ENCODE measurements at regions of chr12 and their contacts with region 1.

Region 1: GRCh38 chr12:101919447-101919846 is 42.1 kb downstream of the DRAM1 start:
- DNase-seq: no peak
- H3K4me3 Mint-ChIP-seq: no peak overlapping the region
- H3K27ac Mint-ChIP-seq: no peak overlapping the region
- H3K4me1 Mint-ChIP-seq: peaks cover 10% of the 10 kb centered on the region
- H3K27me3 Mint-ChIP-seq: peaks cover 2% of the 10 kb centered on the region

Region 2: GRCh38 chr12:101773650-101774162 is 145.7 kb before region 1 on chr12:
- intact Hi-C with region 1: loop called (anchors 2 kb)
- DNase-seq: peak; percentile 47
- H3K4me3 Mint-ChIP-seq: no peak overlapping the region
- H3K27ac Mint-ChIP-seq: peak overlapping the region; percentile 42
- H3K4me1 Mint-ChIP-seq: peaks cover 41% of the 10 kb centered on the region
- H3K27me3 Mint-ChIP-seq: no peaks in the 10 kb centered on the region

Region 3: DNA sequence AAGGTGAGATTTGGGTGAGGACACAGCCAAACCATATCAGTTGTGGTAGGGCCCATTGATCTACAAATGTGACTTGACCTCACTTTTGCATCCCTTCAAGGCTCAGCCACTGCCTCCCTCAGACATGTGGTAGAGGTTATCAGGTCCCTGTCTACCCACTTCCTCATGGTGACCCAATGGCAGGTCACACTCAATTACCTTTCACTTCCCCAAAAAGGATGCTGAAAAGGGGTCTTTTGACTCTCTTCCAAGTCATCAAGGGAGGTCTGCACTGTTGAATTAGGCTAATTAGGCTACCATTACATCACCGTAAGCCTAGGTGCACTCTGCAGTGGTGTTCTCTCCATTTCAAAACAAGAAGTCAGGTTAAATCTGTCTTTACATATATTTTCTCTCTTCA is 64.7 kb before region 1 on chr12:
- intact Hi-C with region 1: no loop called
- DNase-seq: no peak
- H3K4me3 Mint-ChIP-seq: no peak overlapping the region
- H3K27ac Mint-ChIP-seq: no peak overlapping the region
- H3K4me1 Mint-ChIP-seq: peaks cover 28% of the 10 kb centered on the region
- H3K27me3 Mint-ChIP-seq: no peaks in the 10 kb centered on the region

Region 4: GRCh38 chr12:102169922-102170621 is 250.6 kb after region 1 on chr12:
- intact Hi-C with region 1: loop called (anchors 5 kb)
- DNase-seq: no peak
- H3K4me3 Mint-ChIP-seq: no peak overlapping the region
- H3K27ac Mint-ChIP-seq: no peak overlapping the region
- H3K4me1 Mint-ChIP-seq: peaks cover 29% of the 10 kb centered on the region
- H3K27me3 Mint-ChIP-seq: no peaks in the 10 kb centered on the region

Region 5: DNA sequence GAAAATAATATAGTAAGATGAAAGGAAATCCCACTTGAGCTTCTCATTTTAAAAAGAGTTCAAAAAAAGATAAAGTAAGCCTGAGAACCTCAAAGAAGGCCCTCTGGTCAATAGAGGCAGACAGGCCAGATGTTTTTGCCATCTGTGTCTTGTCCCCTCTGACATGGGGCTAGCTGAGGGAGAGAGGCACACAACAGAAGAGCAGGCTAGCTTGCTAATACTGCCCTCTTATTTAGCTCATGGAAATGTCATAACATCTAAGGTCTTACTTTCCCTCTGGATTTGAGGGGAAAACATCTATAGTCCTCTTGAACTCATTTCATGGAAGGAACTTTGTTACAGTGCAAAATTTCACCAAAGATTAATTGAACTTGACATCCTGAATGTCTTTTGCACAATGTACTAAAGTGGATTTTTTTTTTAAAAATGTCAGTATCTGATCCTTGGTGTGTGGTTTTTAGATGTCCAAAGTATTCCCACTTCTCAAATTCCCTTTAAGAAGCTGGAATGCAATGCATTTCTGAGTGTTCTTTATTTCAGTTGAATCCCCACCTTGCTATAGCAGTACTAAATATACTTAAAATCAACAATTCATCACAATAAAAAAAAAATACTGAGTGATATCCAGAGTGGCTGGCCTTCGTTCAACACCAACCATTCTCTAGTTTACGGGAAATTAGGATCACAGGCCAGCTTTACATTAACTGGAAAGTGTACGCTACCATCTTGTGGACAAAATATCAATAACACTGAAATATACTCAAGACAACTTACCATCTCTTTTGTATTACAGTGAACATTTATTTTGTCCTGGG is 820.9 kb after region 1 on chr12:
- intact Hi-C with region 1: loop called (anchors 2 kb)
- DNase-seq: no peak
- H3K4me3 Mint-ChIP-seq: no peak overlapping the region
- H3K27ac Mint-ChIP-seq: no peak overlapping the region
- H3K4me1 Mint-ChIP-seq: peaks cover 4% of the 10 kb centered on the region
- H3K27me3 Mint-ChIP-seq: peaks cover under 1% of the 10 kb centered on the region

Region 6: GRCh38 chr12:102811110-102811737 is 891.8 kb after region 1 on chr12:
- intact Hi-C with region 1: loop called (anchors 1 kb)
- DNase-seq: no peak
- H3K4me3 Mint-ChIP-seq: no peak overlapping the region
- H3K27ac Mint-ChIP-seq: no peak overlapping the region
- H3K4me1 Mint-ChIP-seq: no peaks in the 10 kb centered on the region
- H3K27me3 Mint-ChIP-seq: peaks cover 5% of the 10 kb centered on the region

Region 7: DNA sequence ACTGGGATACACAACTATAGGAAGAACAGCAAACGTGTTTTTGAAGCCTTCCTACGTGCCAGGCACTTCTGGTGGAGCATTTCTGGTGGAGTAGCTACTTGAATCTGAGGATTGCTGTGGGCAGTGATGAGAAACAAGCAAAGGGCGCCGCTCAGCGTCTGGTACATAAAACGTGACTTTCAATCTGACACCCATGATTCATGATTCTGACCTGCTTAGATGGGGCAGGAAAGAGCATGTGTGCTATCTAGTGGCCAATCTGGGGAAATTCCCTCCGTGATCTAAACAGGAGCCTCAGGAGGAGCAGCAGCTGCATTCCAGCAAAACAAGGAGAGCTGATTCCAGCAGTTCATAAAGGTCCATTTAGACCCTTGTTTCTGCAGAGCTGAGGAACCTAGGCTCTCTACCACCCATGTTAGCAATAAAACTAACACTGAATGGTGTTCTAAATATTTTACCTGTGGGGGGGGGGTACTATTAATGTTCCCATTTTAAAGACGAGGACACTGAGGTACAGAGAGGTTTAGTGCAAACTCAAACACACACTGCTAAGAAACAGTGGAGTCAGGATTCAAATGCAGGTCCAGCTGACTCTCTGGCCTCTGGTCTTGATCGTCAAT is 959.8 kb after region 1 on chr12:
- intact Hi-C with region 1: loop called (anchors 1 kb)
- DNase-seq: no peak
- H3K4me3 Mint-ChIP-seq: no peak overlapping the region
- H3K27ac Mint-ChIP-seq: no peak overlapping the region
- H3K4me1 Mint-ChIP-seq: peaks cover 5% of the 10 kb centered on the region
- H3K27me3 Mint-ChIP-seq: peaks cover 4% of the 10 kb centered on the region